ENCODE measurements at regions of chr10 and their contacts with region 1.

Region 1: DNA sequence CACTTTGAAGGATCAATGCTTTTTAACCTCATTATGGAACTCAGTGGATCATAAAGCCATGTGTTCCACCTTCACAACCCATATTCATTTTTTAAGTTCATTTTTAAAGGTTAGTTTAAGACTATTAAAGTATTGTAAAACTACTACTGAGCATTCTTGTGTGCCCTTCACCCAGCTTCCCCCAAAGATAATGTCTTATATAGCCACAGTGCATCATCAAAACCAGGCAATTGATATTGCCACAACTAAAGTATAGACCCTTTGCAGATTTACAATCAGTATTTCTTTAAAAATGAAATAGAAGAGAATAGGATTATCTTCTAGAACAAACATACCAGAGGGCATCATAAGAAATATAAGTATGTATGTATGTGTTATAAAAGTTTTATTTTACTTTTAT is 597.1 kb downstream of the CCSER2 start:
- DNase-seq: no peak
- H3K4me3 ChIP-seq: no peak overlapping the region
- H3K4me3 Mint-ChIP-seq: no peak overlapping the region
- H3K27ac Mint-ChIP-seq: no peak overlapping the region
- H3K4me1 ChIP-seq: no peaks in the 10 kb centered on the region
- H3K4me1 Mint-ChIP-seq: no peaks in the 10 kb centered on the region
- H3K27me3 ChIP-seq: no peaks in the 10 kb centered on the region
- H3K27me3 Mint-ChIP-seq: no peaks in the 10 kb centered on the region
- CTCF ChIP-seq: no peak

Region 2: GRCh38 chr10:85105614-85106255 is 180.2 kb after region 1 on chr10:
- CTCF ChIA-PET with region 1: no interaction called
- POLR2A ChIA-PET with region 1: no interaction called
- intact Hi-C with region 1: loop called (anchors 5 kb)
- DNase-seq: peak in 1 of 2 experiments; percentile 29
- H3K4me3 ChIP-seq: no peak overlapping the region
- H3K4me3 Mint-ChIP-seq: no peak overlapping the region
- H3K27ac Mint-ChIP-seq: peak overlapping the region; percentile 34
- H3K4me1 ChIP-seq: no peaks in the 10 kb centered on the region
- H3K4me1 Mint-ChIP-seq: no peaks in the 10 kb centered on the region
- H3K27me3 ChIP-seq: no peaks in the 10 kb centered on the region
- H3K27me3 Mint-ChIP-seq: peaks cover 8% of the 10 kb centered on the region
- CTCF ChIP-seq: peak; percentile 17 to 21

Measured in Caco-2 (cell line).